ENCODE measurements at regions of chr10 and their contacts with region 1.

Region 1: GRCh38 chr10:122796796-122797195 is 48.9 kb downstream of the CUZD1 start:
- DNase-seq: no peak
- H3K4me3 ChIP-seq: no peak overlapping the region
- CTCF ChIP-seq: no peak
- POLR2A ChIP-seq: no peak

Region 2: GRCh38 chr10:122749886-122750285 is 46.9 kb before region 1 on chr10:
- intact Hi-C with region 1: loop called (anchors 1 kb)
- DNase-seq: no peak
- H3K4me3 ChIP-seq: no peak overlapping the region
- CTCF ChIP-seq: no peak
- POLR2A ChIP-seq: no peak

Region 3: GRCh38 chr10:123759501-123760031 is 962.8 kb after region 1 on chr10:
- intact Hi-C with region 1: no loop called
- DNase-seq: peak in 1 of 2 donors; percentile 75
- H3K4me3 ChIP-seq: no peak overlapping the region
- CTCF ChIP-seq: no peak
- POLR2A ChIP-seq: no peak